ENCODE measurements at regions of chr18 and their contacts with region 1.

Region 1: GRCh38 chr18:48777026-48777743 is 173.6 kb downstream of the SMAD7 start:
- DNase-seq: peak; percentile 84
- ATAC-seq: peak; percentile 97
- H3K4me3 Mint-ChIP-seq: no peak overlapping the region
- H3K27ac Mint-ChIP-seq: no peak overlapping the region
- H3K4me1 Mint-ChIP-seq: peaks cover 6% of the 10 kb centered on the region
- H3K27me3 Mint-ChIP-seq: peaks cover 3% of the 10 kb centered on the region

Region 2: GRCh38 chr18:48834413-48835031 is 57.3 kb after region 1 on chr18:
- CTCF ChIA-PET with region 1: interaction called, 4 read pairs
- POLR2A ChIA-PET with region 1: no interaction called
- intact Hi-C with region 1: loop called in 1 of 2 experiments (anchors 5 kb)
- DNase-seq: peak; percentile 87
- ATAC-seq: peak; percentile 88
- H3K4me3 Mint-ChIP-seq: peak overlapping the region; percentile 73
- H3K27ac Mint-ChIP-seq: peak overlapping the region; percentile 92
- H3K4me1 Mint-ChIP-seq: peaks cover 73% of the 10 kb centered on the region
- H3K27me3 Mint-ChIP-seq: no peaks in the 10 kb centered on the region

Region 3: GRCh38 chr18:48951448-48952286 is 174.5 kb after region 1 on chr18:
- CTCF ChIA-PET with region 1: interaction called, 3 read pairs
- POLR2A ChIA-PET with region 1: no interaction called
- intact Hi-C with region 1: loop called in 1 of 2 experiments (anchors 1 kb)
- DNase-seq: peak; percentile 84
- ATAC-seq: peak; percentile 42
- H3K4me3 Mint-ChIP-seq: peak overlapping the region; percentile 97
- H3K27ac Mint-ChIP-seq: peak overlapping the region; percentile 88
- H3K4me1 Mint-ChIP-seq: peaks cover 41% of the 10 kb centered on the region
- H3K27me3 Mint-ChIP-seq: no peaks in the 10 kb centered on the region

Region 4: GRCh38 chr18:48997985-48998831 is 221.0 kb after region 1 on chr18:
- CTCF ChIA-PET with region 1: no interaction called
- POLR2A ChIA-PET with region 1: no interaction called
- intact Hi-C with region 1: loop called in 1 of 2 experiments (anchors 5 kb)
- DNase-seq: no peak
- ATAC-seq: no peak
- H3K4me3 Mint-ChIP-seq: no peak overlapping the region
- H3K27ac Mint-ChIP-seq: no peak overlapping the region
- H3K4me1 Mint-ChIP-seq: peaks cover 17% of the 10 kb centered on the region
- H3K27me3 Mint-ChIP-seq: peaks cover 1% of the 10 kb centered on the region

Region 5: GRCh38 chr18:49178736-49179135 is 401.6 kb after region 1 on chr18:
- CTCF ChIA-PET with region 1: no interaction called
- POLR2A ChIA-PET with region 1: no interaction called
- intact Hi-C with region 1: loop called (anchors 5 kb)
- DNase-seq: peak; percentile 17
- ATAC-seq: no peak
- H3K4me3 Mint-ChIP-seq: no peak overlapping the region
- H3K27ac Mint-ChIP-seq: no peak overlapping the region
- H3K4me1 Mint-ChIP-seq: peaks cover 21% of the 10 kb centered on the region
- H3K27me3 Mint-ChIP-seq: no peaks in the 10 kb centered on the region

Measured in activated CD4-positive, alpha-beta T cell treated with anti-CD3 and anti-CD28 coated beads for 36 hours (primary cell).